CD4-positive, alpha-beta T cell (primary cell): ENCODE measurements at regions of chr20 and their contacts with region 1.

Region 1: GRCh38 chr20:12318043-12318442 is 400.4 kb downstream of the BTBD3 start:
- DNase-seq: no peak
- ATAC-seq: no peak
- H3K4me3 ChIP-seq: no peak overlapping the region
- H3K4me3 Mint-ChIP-seq: no peak overlapping the region
- H3K27ac ChIP-seq: no peak overlapping the region
- H3K27ac Mint-ChIP-seq: no peak overlapping the region
- H3K4me1 ChIP-seq: no peaks in the 10 kb centered on the region
- H3K4me1 Mint-ChIP-seq: no peaks in the 10 kb centered on the region
- H3K27me3 ChIP-seq: no peaks in the 10 kb centered on the region
- H3K27me3 Mint-ChIP-seq: no peaks in the 10 kb centered on the region
- CTCF ChIP-seq: no peak

Region 2: DNA sequence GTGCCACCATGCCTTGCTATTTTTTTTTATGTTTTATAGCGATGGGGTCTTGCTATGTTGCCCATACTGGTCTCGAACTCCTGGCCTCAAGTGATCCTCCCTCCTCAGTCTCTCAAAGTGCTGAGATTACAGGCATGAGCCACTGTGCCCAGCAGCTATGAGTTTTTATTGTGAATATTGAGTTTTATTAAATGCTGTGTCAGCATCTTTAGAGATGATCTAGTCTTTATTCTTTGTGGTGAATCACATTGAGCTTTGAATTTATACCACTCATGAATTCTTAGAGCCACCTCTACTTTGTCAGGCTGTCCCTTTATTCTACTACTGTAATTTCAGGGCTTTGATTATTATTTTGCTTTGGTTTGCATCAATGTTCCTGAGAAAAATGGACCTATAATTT is 27.9 kb after region 1 on chr20:
- CTCF ChIA-PET with region 1: no interaction called
- POLR2A ChIA-PET with region 1: no interaction called
- intact Hi-C with region 1: no loop called
- DNase-seq: no peak
- ATAC-seq: no peak
- H3K4me3 ChIP-seq: no peak overlapping the region
- H3K4me3 Mint-ChIP-seq: no peak overlapping the region
- H3K27ac ChIP-seq: no peak overlapping the region
- H3K27ac Mint-ChIP-seq: no peak overlapping the region
- H3K4me1 ChIP-seq: no peaks in the 10 kb centered on the region
- H3K4me1 Mint-ChIP-seq: no peaks in the 10 kb centered on the region
- H3K27me3 ChIP-seq: no peaks in the 10 kb centered on the region
- H3K27me3 Mint-ChIP-seq: no peaks in the 10 kb centered on the region
- CTCF ChIP-seq: no peak

Region 3: GRCh38 chr20:12554424-12554823 is 236.4 kb after region 1 on chr20:
- CTCF ChIA-PET with region 1: no interaction called
- POLR2A ChIA-PET with region 1: no interaction called
- intact Hi-C with region 1: loop called in 1 of 2 experiments (anchors 10 kb)
- DNase-seq: no peak
- ATAC-seq: no peak
- H3K4me3 ChIP-seq: no peak overlapping the region
- H3K4me3 Mint-ChIP-seq: no peak overlapping the region
- H3K27ac ChIP-seq: no peak overlapping the region
- H3K27ac Mint-ChIP-seq: no peak overlapping the region
- H3K4me1 ChIP-seq: no peaks in the 10 kb centered on the region
- H3K4me1 Mint-ChIP-seq: no peaks in the 10 kb centered on the region
- H3K27me3 ChIP-seq: no peaks in the 10 kb centered on the region
- H3K27me3 Mint-ChIP-seq: no peaks in the 10 kb centered on the region
- CTCF ChIP-seq: no peak